MCF 10A (cell line): ENCODE measurements at regions of chr11 and their contacts with region 1.

Region 1: DNA sequence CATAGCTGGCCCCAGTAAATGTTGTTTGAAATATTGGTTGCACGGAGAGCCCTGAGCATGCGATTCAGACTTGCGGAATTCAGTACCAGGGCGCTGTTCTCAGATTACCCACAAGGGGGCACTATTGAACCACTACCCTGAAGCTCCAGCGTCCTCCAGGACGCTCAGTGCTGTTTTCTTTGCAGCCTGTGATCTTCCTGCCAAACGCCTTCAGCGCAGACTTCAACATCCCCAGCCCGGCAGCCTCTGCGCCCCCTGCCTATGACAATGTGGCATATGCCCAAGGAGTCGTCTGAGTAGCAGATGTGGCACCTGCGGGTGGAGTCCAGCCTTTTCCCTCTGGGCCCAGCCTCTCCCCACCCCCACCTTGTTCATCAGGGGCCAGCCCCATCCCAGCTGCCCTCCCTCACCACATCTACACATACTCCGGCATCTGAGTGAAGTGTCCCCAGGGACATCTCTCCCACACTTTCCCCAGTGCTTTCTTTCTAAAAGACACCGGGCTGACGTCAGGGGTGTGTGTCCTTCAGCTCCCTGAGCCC is 9.6 kb upstream of the MS4A10 start:
- DNase-seq: peak; percentile 79
- H3K4me3 Mint-ChIP-seq: no peak overlapping the region
- H3K27ac Mint-ChIP-seq: no peak overlapping the region
- H3K4me1 Mint-ChIP-seq: peaks cover 16% of the 10 kb centered on the region
- H3K27me3 Mint-ChIP-seq: no peaks in the 10 kb centered on the region
- CTCF ChIP-seq: peak; percentile 82

Region 2: GRCh38 chr11:60731586-60731985 is 43.9 kb before region 1 on chr11:
- CTCF ChIA-PET with region 1: no interaction called
- POLR2A ChIA-PET with region 1: no interaction called
- intact Hi-C with region 1: no loop called
- DNase-seq: no peak
- H3K4me3 Mint-ChIP-seq: no peak overlapping the region
- H3K27ac Mint-ChIP-seq: no peak overlapping the region
- H3K4me1 Mint-ChIP-seq: no peaks in the 10 kb centered on the region
- H3K27me3 Mint-ChIP-seq: peaks cover 44% of the 10 kb centered on the region
- CTCF ChIP-seq: no peak

Region 3: GRCh38 chr11:60762851-60763691 is 12.4 kb before region 1 on chr11:
- CTCF ChIA-PET with region 1: interaction called, 72 read pairs
- POLR2A ChIA-PET with region 1: interaction called, 3 read pairs
- intact Hi-C with region 1: no loop called
- DNase-seq: peak; percentile 29
- H3K4me3 Mint-ChIP-seq: no peak overlapping the region
- H3K27ac Mint-ChIP-seq: no peak overlapping the region
- H3K4me1 Mint-ChIP-seq: no peaks in the 10 kb centered on the region
- H3K27me3 Mint-ChIP-seq: peaks cover 33% of the 10 kb centered on the region
- CTCF ChIP-seq: peak; percentile 30

Region 4: DNA sequence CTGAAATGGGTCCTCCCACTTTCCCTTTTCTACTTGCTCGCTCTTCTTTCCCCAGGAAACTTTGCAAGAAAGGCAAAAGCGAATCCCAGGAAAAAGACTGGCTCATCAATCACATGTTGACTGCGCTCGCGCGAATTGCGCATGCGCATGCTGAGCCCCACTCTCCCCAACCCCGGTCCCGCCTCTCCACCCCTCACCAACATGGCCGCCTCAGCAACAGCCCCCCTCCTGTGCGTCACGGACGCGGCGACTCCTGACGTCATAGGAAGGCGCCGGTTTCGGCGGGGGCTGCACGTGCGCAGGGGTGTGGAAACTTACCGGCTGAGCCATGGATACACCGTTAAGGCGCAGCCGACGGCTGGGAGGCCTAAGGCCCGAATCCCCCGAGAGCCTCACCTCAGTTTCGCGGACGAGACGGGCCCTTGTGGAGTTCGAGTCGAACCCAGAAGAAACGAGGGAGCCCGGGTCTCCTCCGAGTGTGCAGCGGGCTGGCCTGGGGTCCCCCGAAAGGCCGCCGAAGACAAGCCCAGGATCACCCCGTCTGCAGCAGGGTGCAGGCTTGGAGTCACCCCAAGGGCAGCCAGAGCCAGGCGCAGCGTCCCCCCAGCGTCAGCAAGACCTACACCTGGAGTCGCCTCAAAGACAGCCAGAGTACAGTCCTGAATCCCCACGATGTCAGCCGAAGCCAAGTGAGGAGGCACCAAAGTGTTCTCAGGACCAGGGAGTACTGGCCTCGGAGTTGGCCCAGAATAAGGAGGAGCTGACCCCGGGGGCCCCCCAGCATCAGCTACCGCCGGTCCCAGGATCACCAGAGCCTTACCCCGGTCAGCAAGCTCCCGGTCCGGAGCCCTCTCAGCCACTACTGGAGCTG is 66.5 kb after region 1 on chr11 and contains the start of gene CCDC86:
- CTCF ChIA-PET with region 1: interaction called, 3 read pairs
- POLR2A ChIA-PET with region 1: no interaction called
- intact Hi-C with region 1: loop called (anchors 1 kb)
- DNase-seq: peak; percentile 94
- H3K4me3 Mint-ChIP-seq: peak within 1 kb of the TSS; percentile 91
- H3K27ac Mint-ChIP-seq: peak within 1 kb of the TSS; percentile 92
- H3K4me1 Mint-ChIP-seq: peaks cover 42% of the 10 kb centered on the region
- H3K27me3 Mint-ChIP-seq: no peaks in the 10 kb centered on the region
- CTCF ChIP-seq: no peak
- total RNA-seq, gene CCDC86: 37.5 and 57.8 TPM in 2 replicates

Region 5: GRCh38 chr11:60887556-60887955 is 112.1 kb after region 1 on chr11:
- CTCF ChIA-PET with region 1: interaction called, 26 read pairs
- POLR2A ChIA-PET with region 1: interaction called, 3 read pairs
- intact Hi-C with region 1: loop called (anchors 1 kb)
- DNase-seq: peak; percentile 55
- H3K4me3 Mint-ChIP-seq: no peak overlapping the region
- H3K27ac Mint-ChIP-seq: no peak overlapping the region
- H3K4me1 Mint-ChIP-seq: no peaks in the 10 kb centered on the region
- H3K27me3 Mint-ChIP-seq: no peaks in the 10 kb centered on the region
- CTCF ChIP-seq: peak; percentile 49

Region 6: DNA sequence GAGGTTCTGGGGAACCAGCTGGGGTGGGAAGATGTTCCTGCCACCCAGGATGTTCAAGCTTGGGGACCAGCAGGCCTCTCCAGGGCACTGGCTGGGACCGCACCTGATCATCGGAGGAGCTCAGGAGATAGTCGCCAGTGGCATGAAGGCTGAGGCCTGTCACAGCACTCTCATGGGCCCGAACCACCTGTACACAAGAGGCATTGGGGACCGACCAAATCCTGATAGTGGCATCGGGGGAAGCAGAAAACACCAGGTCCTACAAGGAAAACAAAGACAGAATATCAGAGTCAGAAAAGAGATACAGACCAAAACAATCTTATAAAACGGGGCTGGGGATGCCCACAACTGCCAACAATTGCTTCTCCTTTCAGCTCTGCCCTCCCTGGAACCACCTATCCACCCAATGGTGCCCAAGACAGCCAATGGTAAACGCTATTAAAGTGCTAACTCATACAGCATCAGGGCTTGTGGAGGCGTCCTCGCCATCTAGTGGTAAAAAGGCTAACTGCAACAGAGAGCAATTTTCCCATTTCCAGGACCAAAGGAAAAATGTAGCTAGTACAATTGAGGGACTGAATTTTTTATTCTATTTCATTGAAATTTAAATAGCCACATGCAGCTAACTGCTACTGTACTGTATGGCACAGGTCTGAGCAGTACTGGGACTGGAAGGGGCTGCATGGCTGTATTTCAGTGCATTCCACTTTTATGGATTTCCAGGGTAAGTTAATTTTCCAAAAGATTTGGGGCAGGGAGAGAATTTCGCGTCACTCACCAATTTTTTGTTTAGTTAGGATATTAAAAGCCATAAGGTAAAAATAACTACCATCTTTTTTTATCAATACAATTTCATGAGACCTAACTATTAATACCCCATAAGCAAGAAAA is 123.8 kb after region 1 on chr11:
- CTCF ChIA-PET with region 1: interaction called, 22 read pairs
- POLR2A ChIA-PET with region 1: interaction called, 3 read pairs
- intact Hi-C with region 1: loop called (anchors 1 kb)
- DNase-seq: peak; percentile 64
- H3K4me3 Mint-ChIP-seq: no peak overlapping the region
- H3K27ac Mint-ChIP-seq: no peak overlapping the region
- H3K4me1 Mint-ChIP-seq: peaks cover 5% of the 10 kb centered on the region
- H3K27me3 Mint-ChIP-seq: no peaks in the 10 kb centered on the region
- CTCF ChIP-seq: peak; percentile 92

Region 7: GRCh38 chr11:61173456-61173855 is 398.0 kb after region 1 on chr11:
- CTCF ChIA-PET with region 1: interaction called, 4 read pairs
- POLR2A ChIA-PET with region 1: no interaction called
- intact Hi-C with region 1: loop called (anchors 5 kb)
- DNase-seq: peak; percentile 48
- H3K4me3 Mint-ChIP-seq: no peak overlapping the region
- H3K27ac Mint-ChIP-seq: no peak overlapping the region
- H3K4me1 Mint-ChIP-seq: peaks cover 9% of the 10 kb centered on the region
- H3K27me3 Mint-ChIP-seq: peaks cover 56% of the 10 kb centered on the region
- CTCF ChIP-seq: peak; percentile 27

Region 8: DNA sequence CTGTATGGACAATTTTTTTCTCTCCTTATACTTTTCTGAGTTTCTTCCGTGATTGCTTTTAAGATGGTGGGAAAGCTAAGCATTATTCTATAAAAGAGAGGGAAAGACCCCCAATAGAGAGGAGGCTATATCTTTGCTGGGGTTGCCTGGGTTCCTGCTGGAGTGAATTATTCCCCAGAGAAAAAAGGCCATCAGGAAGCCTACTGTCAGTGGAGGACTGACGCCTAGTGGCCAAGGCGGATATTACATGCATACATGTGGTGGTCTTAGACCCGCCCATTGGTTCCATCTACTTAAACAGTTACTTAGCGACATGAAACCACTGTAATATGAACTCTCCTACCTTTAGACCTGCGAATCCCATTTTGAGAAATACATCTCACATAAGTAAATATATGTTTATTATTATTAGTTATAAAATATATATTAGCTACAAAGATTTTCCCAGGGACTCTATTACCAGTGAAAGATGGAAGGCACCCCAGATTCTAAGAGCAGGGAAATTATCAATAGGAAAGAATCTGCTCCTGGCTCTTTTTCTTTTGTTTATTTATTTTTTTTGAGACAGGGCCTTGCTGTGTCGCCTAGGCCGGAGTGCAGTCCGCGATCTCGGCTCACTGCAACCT is 412.1 kb after region 1 on chr11:
- CTCF ChIA-PET with region 1: interaction called, 5 read pairs
- POLR2A ChIA-PET with region 1: no interaction called
- intact Hi-C with region 1: loop called (anchors 1 kb)
- DNase-seq: peak; percentile 73
- H3K4me3 Mint-ChIP-seq: no peak overlapping the region
- H3K27ac Mint-ChIP-seq: no peak overlapping the region
- H3K4me1 Mint-ChIP-seq: no peaks in the 10 kb centered on the region
- H3K27me3 Mint-ChIP-seq: no peaks in the 10 kb centered on the region
- CTCF ChIP-seq: peak; percentile 88